ENCODE measurements at regions of chr7 and their contacts with region 1.

Region 1: GRCh38 chr7:4641667-4642467 is 40.2 kb upstream of the FOXK1 start:
- DNase-seq: peak; percentile 100
- ATAC-seq: peak; percentile 85
- H3K4me3 Mint-ChIP-seq: peak overlapping the region; percentile 87
- H3K27ac Mint-ChIP-seq: peak overlapping the region; percentile 93
- H3K4me1 Mint-ChIP-seq: peaks cover 9% of the 10 kb centered on the region
- H3K27me3 Mint-ChIP-seq: no peaks in the 10 kb centered on the region
- CTCF ChIP-seq: no peak

Region 2: GRCh38 chr7:4606797-4607196 is 35.1 kb before region 1 on chr7:
- CTCF ChIA-PET with region 1: no interaction called
- POLR2A ChIA-PET with region 1: no interaction called
- intact Hi-C with region 1: no loop called
- DNase-seq: no peak
- ATAC-seq: no peak
- H3K4me3 Mint-ChIP-seq: no peak overlapping the region
- H3K27ac Mint-ChIP-seq: no peak overlapping the region
- H3K4me1 Mint-ChIP-seq: no peaks in the 10 kb centered on the region
- H3K27me3 Mint-ChIP-seq: peaks cover 7% of the 10 kb centered on the region
- CTCF ChIP-seq: no peak

Region 3: GRCh38 chr7:4689668-4690067 is 47.8 kb after region 1 on chr7:
- CTCF ChIA-PET with region 1: interaction called, 6 read pairs
- POLR2A ChIA-PET with region 1: interaction called, 151 read pairs
- intact Hi-C with region 1: no loop called
- DNase-seq: no peak
- ATAC-seq: peak; percentile 65
- H3K4me3 Mint-ChIP-seq: peak overlapping the region; percentile 52
- H3K27ac Mint-ChIP-seq: peak overlapping the region; percentile 21
- H3K4me1 Mint-ChIP-seq: peaks cover 78% of the 10 kb centered on the region
- H3K27me3 Mint-ChIP-seq: no peaks in the 10 kb centered on the region
- CTCF ChIP-seq: no peak

Region 4: DNA sequence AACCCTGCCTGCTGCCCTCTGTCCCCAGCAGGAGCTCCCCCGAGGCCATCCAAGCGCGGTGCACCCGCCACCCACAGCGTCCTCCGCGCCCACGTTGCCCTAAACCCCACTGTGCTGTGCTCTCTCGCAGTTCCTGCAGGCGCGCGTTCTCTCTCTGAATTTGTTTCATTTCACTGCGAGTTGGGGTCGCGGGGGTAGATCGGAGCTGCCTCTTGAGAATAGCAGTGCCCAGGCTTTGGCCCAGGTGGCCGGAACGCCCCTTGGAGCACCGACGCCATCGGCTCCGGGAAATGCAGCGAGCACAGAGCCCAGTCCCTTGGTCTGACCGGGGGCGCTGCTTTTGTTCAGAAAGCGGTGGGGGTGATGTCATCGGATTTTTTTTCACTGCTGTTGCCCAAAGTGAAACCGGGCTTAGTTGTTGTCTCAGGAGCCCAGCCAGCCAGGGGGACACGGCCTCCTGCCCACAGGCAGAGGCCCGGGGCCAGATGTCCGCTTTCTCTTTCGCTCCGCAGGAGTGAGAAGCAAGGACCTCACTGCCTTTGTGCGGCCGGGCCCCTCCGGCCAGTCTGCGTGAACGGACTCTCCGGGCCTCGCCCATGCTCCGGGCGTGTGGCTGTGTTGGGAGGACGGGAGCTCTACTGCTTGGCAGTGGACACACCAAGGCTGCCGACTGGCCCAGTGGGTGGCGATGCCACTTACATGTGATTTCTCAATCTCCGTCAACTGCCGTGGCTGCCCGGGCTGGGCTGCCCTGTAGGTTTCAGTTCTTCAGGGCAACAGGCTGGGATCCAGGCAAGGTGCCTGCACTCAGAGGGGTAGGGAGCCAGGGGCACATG is 83.4 kb after region 1 on chr7:
- CTCF ChIA-PET with region 1: no interaction called
- POLR2A ChIA-PET with region 1: interaction called, 6 read pairs
- intact Hi-C with region 1: loop called (anchors 1 kb)
- DNase-seq: peak; percentile 39
- ATAC-seq: peak; percentile 76
- H3K4me3 Mint-ChIP-seq: peak overlapping the region; percentile 90
- H3K27ac Mint-ChIP-seq: peak overlapping the region; percentile 84
- H3K4me1 Mint-ChIP-seq: peaks cover 52% of the 10 kb centered on the region
- H3K27me3 Mint-ChIP-seq: no peaks in the 10 kb centered on the region
- CTCF ChIP-seq: no peak

Region 5: GRCh38 chr7:4753711-4754432 is 112.0 kb after region 1 on chr7:
- CTCF ChIA-PET with region 1: no interaction called
- POLR2A ChIA-PET with region 1: interaction called, 7 read pairs
- intact Hi-C with region 1: loop called (anchors 1 kb)
- DNase-seq: peak; percentile 75
- ATAC-seq: peak; percentile 94
- H3K4me3 Mint-ChIP-seq: no peak overlapping the region
- H3K27ac Mint-ChIP-seq: no peak overlapping the region
- H3K4me1 Mint-ChIP-seq: peaks cover 10% of the 10 kb centered on the region
- H3K27me3 Mint-ChIP-seq: no peaks in the 10 kb centered on the region
- CTCF ChIP-seq: no peak

Region 6: GRCh38 chr7:4830176-4830575 is 188.3 kb after region 1 on chr7:
- CTCF ChIA-PET with region 1: no interaction called
- POLR2A ChIA-PET with region 1: no interaction called
- intact Hi-C with region 1: no loop called
- DNase-seq: peak; percentile 32
- ATAC-seq: peak; percentile 69
- H3K4me3 Mint-ChIP-seq: no peak overlapping the region
- H3K27ac Mint-ChIP-seq: no peak overlapping the region
- H3K4me1 Mint-ChIP-seq: peaks cover 4% of the 10 kb centered on the region
- H3K27me3 Mint-ChIP-seq: no peaks in the 10 kb centered on the region
- CTCF ChIP-seq: no peak

Region 7: DNA sequence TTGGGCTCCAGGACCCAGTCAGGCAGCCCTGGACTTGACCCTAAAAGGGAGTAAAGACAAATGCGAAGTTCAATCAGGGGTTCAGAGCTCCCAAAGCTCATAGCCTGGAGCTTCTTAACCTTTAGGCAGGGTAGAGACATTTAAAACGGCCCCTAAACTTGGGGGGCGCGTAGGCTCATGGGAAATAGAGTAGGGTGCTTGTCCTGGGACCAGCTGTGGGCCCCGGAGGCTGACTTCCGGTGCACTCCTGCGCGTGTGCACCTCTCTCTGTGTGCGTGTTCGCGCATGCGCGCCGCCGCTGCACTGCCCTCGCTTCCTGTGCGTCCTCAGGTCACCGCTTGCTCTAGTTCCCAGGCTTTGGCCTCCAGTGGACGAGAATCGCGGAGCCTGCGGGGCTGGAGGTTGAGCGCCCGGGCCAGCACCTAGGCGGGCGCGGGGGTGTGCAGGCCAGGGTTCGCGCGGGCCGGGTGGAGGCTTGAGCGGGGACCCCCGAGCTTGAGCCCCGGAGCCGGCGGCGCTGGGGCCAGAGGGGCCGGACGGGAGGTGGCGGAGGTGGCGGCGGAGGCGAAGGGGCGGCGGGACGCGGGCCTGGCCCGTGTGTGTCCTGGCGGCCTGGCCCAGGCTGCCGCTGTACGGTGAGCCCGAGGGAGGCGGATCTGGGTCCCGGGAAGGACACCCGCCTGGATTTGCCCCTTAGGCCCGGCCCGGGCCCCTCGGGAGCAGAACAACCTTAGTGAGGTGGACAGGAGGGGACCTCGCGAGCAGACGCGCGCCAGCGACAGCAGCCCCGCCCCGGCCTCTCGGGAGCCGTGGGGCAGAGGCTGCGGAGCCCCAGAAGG is 403.9 kb after region 1 on chr7 and contains the start of gene RBAK:
- CTCF ChIA-PET with region 1: no interaction called
- POLR2A ChIA-PET with region 1: interaction called, 3 read pairs
- intact Hi-C with region 1: loop called (anchors 2 kb)
- DNase-seq: peak; percentile 83
- ATAC-seq: peak; percentile 99
- H3K4me3 Mint-ChIP-seq: peak within 1 kb of the TSS; percentile 92
- H3K27ac Mint-ChIP-seq: peak within 1 kb of the TSS; percentile 79
- H3K4me1 Mint-ChIP-seq: peaks cover 21% of the 10 kb centered on the region
- H3K27me3 Mint-ChIP-seq: no peaks in the 10 kb centered on the region
- CTCF ChIP-seq: no peak
- total RNA-seq, gene RBAK: 16.3 and 20.2 TPM in 2 replicates

Measured in activated B cell treated with CpG ODN at 0.5 μM for 24 hours (primary cell).